ENCODE measurements at regions of chr16 and their contacts with region 1.

Region 1: GRCh38 chr16:19071811-19072777 is 4.7 kb downstream of the COQ7 start:
- DNase-seq: peak in 1 of 5 donors; percentile 21
- H3K4me3 ChIP-seq: no peak overlapping the region
- H3K27ac ChIP-seq: no peak overlapping the region
- H3K4me1 ChIP-seq: no peaks in the 10 kb centered on the region
- H3K27me3 ChIP-seq: no peaks in the 10 kb centered on the region
- CTCF ChIP-seq: no peak
- EP300 ChIP-seq: no peak
- POLR2A ChIP-seq: no peak

Region 2: DNA sequence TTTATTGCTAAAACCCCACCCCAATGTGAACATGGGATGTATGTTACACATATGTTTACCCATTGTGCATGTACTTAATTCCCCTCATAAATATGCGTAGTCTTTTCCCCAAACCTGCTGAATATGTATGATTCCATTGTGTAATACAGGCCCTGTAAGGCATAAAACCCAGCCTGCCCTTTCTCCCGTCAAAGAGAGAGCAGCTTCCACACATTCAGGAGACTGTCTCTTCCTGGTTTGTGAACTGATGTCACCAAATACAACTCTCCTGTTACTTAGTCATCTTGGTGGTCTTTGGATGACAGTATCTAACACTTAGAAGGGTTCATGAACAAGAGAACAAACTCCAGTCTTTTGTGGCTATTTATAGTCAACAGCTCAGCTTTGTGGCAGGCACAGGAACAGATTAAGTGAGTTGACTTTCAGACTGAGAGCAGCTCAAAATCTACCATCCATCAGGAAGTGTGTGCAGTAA is 113.0 kb before region 1 on chr16:
- intact Hi-C with region 1: no loop called
- DNase-seq: no peak
- H3K4me3 ChIP-seq: no peak overlapping the region
- H3K27ac ChIP-seq: no peak overlapping the region
- H3K4me1 ChIP-seq: no peaks in the 10 kb centered on the region
- H3K27me3 ChIP-seq: no peaks in the 10 kb centered on the region
- CTCF ChIP-seq: no peak
- EP300 ChIP-seq: no peak
- POLR2A ChIP-seq: no peak

Region 3: DNA sequence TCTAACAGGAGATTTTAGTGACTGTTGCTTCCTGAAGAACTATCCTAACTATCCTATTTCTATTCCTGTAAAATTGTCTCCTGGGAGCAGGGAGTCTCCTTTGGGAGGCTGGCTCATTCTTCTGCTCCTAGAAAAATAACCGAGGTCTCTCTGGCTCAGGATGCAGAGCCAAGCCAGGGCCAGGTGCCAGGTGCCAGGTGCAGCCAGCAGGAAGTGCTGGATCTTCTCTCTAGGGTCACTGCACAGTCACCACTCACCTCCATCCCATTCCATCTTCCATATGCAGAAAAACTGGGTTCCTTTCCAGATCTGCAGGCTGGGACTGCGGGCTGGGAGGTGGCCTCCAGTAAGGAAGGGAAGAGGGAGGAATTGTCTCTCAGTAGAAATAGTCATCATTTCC is 92.2 kb before region 1 on chr16:
- intact Hi-C with region 1: loop called in 1 of 4 experiments (anchors 5 kb)
- DNase-seq: no peak
- H3K4me3 ChIP-seq: no peak overlapping the region
- H3K27ac ChIP-seq: no peak overlapping the region
- H3K4me1 ChIP-seq: no peaks in the 10 kb centered on the region
- H3K27me3 ChIP-seq: no peaks in the 10 kb centered on the region
- CTCF ChIP-seq: no peak
- EP300 ChIP-seq: no peak
- POLR2A ChIP-seq: no peak

Region 4: DNA sequence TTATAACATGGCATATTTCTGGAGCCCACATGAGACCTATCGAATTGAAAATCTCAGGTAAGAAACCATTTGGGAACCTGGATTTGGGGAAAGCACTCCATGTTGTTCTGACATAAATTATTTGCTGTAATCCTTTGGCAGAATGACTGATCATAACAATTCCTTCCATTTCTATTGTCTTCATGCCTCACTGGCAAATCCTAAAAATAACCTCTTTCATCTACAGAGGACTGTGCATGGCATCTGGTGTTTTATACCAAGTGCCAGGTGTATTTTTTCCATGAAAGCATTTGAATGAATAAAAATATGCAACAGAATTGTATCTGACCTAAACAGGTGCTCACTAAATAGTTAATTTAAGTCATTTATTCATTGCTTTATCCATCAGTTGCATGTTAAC is 38.3 kb before region 1 on chr16:
- intact Hi-C with region 1: no loop called
- DNase-seq: no peak
- H3K4me3 ChIP-seq: no peak overlapping the region
- H3K27ac ChIP-seq: no peak overlapping the region
- H3K4me1 ChIP-seq: no peaks in the 10 kb centered on the region
- H3K27me3 ChIP-seq: no peaks in the 10 kb centered on the region
- CTCF ChIP-seq: no peak
- EP300 ChIP-seq: no peak
- POLR2A ChIP-seq: no peak

Region 5: DNA sequence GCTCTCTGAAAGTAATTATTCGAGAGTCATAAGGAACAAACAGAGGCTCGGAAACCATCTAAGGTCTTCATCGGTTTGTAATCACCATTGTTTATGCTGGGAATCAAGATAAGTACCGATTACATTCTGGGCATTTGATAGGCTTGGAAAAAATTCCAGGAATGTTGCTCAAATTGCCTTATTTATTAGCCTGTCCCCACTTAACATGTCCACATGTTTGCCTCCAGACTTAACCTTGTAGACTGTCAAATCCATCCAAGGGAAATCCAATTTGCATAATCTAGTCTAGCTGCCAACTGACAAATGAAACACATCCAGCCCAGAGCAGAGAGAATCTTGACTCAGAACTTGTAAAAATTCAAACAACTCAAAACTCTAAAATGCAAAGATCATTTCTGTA is 294.3 kb after region 1 on chr16:
- intact Hi-C with region 1: loop called in 1 of 4 experiments (anchors 5 kb)
- DNase-seq: no peak
- H3K4me3 ChIP-seq: no peak overlapping the region
- H3K27ac ChIP-seq: no peak overlapping the region
- H3K4me1 ChIP-seq: no peaks in the 10 kb centered on the region
- H3K27me3 ChIP-seq: no peaks in the 10 kb centered on the region
- CTCF ChIP-seq: no peak
- EP300 ChIP-seq: no peak
- POLR2A ChIP-seq: no peak